A673 (cell line): ENCODE measurements at regions of chr6 and their contacts with region 1.

Region 1: GRCh38 chr6:135842618-135843392 is 8.7 kb upstream of the PDE7B start:
- DNase-seq: no peak
- H3K4me3 ChIP-seq: no peak overlapping the region
- H3K27ac ChIP-seq: no peak overlapping the region
- H3K4me1 ChIP-seq: no peaks in the 10 kb centered on the region
- H3K27me3 ChIP-seq: peaks cover 99% of the 10 kb centered on the region
- CTCF ChIP-seq: no peak

Region 2: DNA sequence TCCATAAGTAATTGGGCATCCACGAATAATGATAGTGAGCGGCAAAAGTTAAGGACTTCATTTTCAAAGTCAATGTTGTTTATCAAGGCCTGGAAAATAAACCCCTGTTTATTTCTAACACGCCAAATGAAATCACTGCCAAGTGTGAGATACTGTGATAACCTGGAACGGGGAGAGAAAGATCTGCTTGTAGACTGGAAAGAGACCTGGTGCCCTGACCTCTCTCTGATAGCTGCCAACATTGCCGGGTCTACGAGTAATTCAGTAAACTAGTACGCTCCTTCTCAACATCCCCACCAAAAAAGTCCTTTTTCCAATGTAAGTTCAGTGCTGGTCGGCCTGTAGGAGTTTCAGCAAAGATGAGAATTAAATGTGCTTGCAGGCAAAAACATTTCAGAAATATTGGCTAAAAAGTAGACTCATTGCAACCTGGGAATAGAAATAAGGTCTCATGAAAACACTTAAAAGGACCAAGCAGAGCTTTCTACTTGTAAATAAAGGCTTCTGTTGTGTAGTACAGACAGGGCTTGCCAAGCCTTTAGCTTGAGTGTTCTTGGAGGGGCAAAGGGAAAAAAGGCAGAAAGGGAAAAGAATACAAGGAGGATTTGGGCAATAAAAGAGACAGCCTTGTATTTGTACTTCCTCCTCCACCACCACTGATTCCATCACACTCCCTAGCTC is 52.6 kb after region 1 on chr6:
- CTCF ChIA-PET with region 1: no interaction called
- POLR2A ChIA-PET with region 1: no interaction called
- intact Hi-C with region 1: no loop called
- DNase-seq: no peak
- H3K4me3 ChIP-seq: no peak overlapping the region
- H3K27ac ChIP-seq: no peak overlapping the region
- H3K4me1 ChIP-seq: no peaks in the 10 kb centered on the region
- H3K27me3 ChIP-seq: peaks cover 35% of the 10 kb centered on the region
- CTCF ChIP-seq: no peak

Region 3: GRCh38 chr6:135909737-135910387 is 67.1 kb after region 1 on chr6:
- CTCF ChIA-PET with region 1: no interaction called
- POLR2A ChIA-PET with region 1: no interaction called
- intact Hi-C with region 1: no loop called
- DNase-seq: peak; percentile 60
- H3K4me3 ChIP-seq: no peak overlapping the region
- H3K27ac ChIP-seq: no peak overlapping the region
- H3K4me1 ChIP-seq: no peaks in the 10 kb centered on the region
- H3K27me3 ChIP-seq: peaks cover 4% of the 10 kb centered on the region
- CTCF ChIP-seq: peak; percentile 81

Region 4: GRCh38 chr6:135922174-135922573 is 79.4 kb after region 1 on chr6:
- CTCF ChIA-PET with region 1: no interaction called
- POLR2A ChIA-PET with region 1: interaction called, 12 read pairs
- intact Hi-C with region 1: no loop called
- DNase-seq: peak; percentile 62
- H3K4me3 ChIP-seq: no peak overlapping the region
- H3K27ac ChIP-seq: no peak overlapping the region
- H3K4me1 ChIP-seq: no peaks in the 10 kb centered on the region
- H3K27me3 ChIP-seq: peaks cover 37% of the 10 kb centered on the region
- CTCF ChIP-seq: no peak

Region 5: DNA sequence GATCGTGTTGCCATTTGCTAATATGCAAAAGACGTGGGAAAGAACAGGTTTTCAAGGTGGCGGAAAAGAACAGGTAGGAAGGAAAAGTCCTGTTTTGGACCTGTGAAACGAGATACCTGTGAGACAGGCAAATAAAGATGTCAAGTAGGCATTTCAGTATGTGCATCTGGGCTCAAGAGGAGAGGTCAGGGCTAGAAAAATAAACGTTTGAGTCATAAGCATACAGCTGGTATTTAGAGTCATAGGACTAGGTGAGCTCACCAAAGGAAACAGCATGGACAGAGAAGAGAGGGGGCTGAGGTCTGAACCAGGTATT is 392.4 kb after region 1 on chr6:
- CTCF ChIA-PET with region 1: no interaction called
- POLR2A ChIA-PET with region 1: no interaction called
- intact Hi-C with region 1: no loop called
- DNase-seq: no peak
- H3K4me3 ChIP-seq: no peak overlapping the region
- H3K27ac ChIP-seq: no peak overlapping the region
- H3K4me1 ChIP-seq: no peaks in the 10 kb centered on the region
- H3K27me3 ChIP-seq: no peaks in the 10 kb centered on the region
- CTCF ChIP-seq: no peak